ENCODE measurements at regions of chr16 and their contacts with region 1.

Region 1: DNA sequence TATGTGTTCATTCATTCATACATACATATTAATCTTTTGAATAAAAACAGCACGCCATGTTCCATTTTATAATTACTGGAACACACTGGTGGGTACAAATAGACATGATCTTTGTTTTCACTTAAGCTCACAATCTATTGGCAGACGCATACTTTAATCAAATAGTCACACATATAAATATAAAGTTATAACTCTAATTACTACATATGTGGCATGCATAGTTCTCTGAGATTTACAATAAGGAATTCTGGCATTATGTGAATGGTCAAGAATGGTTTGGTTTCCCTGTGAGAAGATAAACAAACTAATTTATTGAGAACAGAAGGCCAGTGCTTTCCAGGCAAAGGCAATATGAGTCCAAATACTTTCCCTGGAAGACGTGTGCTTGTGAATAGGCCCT is 576.2 kb downstream of the CDH8 start:
- DNase-seq: no peak
- ATAC-seq: no peak

Region 2: DNA sequence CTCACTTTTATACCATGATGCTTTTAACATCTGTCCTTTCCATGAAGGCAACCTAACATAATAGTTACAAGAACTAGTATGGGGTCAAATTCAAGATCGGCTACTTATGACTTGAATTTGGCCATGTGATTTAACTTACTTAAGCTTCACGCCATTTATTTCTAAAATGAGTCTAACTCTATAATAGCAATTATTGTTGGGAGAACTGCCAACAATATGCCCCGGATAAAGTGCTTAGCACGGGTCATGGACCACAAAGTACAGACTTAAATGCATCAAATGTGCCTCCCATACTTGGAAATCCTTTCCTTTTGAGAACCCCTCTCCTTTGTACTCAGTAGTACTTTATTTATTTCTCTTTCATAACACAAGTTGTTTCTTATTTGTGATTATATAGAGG is 1122.3 kb before region 1 on chr16:
- intact Hi-C with region 1: loop called (anchors 5 kb)
- DNase-seq: no peak
- ATAC-seq: no peak

Measured in sciatic nerve (tissue), 2 donors.